GM10248 (cell line): ENCODE measurements at regions of chr7 and their contacts with region 1.

Region 1: GRCh38 chr7:128209229-128210035 is 31.6 kb upstream of the LEP start:
- DNase-seq: peak; percentile 87
- CTCF ChIP-seq: peak; percentile 99

Region 2: GRCh38 chr7:127504715-127505114 is 704.7 kb before region 1 on chr7:
- CTCF ChIA-PET with region 1: interaction called, 18 read pairs
- POLR2A ChIA-PET with region 1: no interaction called
- DNase-seq: peak; percentile 18
- CTCF ChIP-seq: peak; percentile 47

Region 3: DNA sequence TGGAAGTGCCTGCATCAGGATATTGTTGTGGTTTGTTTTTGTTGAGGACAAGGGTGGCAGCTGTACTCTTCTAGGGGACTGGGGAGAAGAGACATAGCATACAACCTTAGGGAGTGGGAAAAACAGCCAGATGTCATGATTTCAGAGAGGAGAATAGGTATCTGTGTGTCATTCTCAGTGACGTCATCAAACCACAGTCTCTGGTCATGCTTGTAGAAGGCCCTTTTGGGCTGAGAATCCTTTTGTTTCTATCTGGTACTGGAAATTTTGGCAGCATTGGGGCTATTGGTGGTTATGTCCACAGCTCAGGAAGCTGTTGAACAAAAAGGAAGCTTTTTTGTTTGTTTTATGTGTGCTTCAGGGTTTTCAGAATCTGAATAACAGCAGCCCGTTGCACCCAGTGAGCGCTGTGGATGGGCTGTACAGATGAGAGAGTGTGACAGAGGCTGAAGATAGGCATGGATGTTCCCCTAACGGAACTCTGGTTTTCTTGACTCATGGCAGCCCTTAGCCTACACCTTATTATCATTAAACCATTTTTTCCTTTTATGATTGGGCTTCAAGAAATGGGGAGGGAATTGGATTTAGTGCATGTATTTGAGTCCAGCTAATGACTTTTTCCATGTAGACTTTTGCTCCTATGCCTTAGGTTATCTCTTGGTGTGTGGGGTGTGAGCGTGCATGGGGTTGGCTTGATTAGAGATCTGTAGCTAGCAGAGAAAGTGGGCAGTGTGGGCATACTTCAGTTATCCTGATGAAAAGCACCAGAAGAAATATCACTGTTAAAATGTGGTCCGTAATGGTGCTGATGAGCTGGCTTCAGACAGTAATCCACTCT is 491.7 kb before region 1 on chr7:
- CTCF ChIA-PET with region 1: interaction called, 10 read pairs
- POLR2A ChIA-PET with region 1: no interaction called
- DNase-seq: no peak
- CTCF ChIP-seq: no peak

Region 4: GRCh38 chr7:128135515-128136214 is 73.8 kb before region 1 on chr7:
- CTCF ChIA-PET with region 1: interaction called, 148 read pairs
- POLR2A ChIA-PET with region 1: no interaction called
- DNase-seq: peak; percentile 89
- CTCF ChIP-seq: peak; percentile 93

Region 5: GRCh38 chr7:128221929-128222403 is 12.5 kb after region 1 on chr7:
- CTCF ChIA-PET with region 1: interaction called, 66 read pairs
- POLR2A ChIA-PET with region 1: no interaction called
- DNase-seq: no peak
- CTCF ChIP-seq: no peak